Ovary (tissue), 10 donors: ENCODE measurements at regions of chr2 and their contacts with region 1.

Region 1: GRCh38 chr2:70301344-70302194 is at the start of gene FAM136A:
- DNase-seq: peak; percentile 81 to 92 (median 88)
- H3K4me3 ChIP-seq: peak within 1 kb of the TSS; percentile 82
- H3K27ac ChIP-seq: peak within 1 kb of the TSS; percentile 52 to 75
- H3K4me1 ChIP-seq: peaks cover 2% of the 10 kb centered on the region
- H3K27me3 ChIP-seq: no peaks in the 10 kb centered on the region
- CTCF ChIP-seq: peak; percentile 89 to 95 (median 94)
- EP300 ChIP-seq: no peak
- POLR2A ChIP-seq: no peak
- total RNA-seq, gene FAM136A: 10.4 to 23.1 (median 17.2) TPM

Region 2: GRCh38 chr2:70340921-70341765 is 39.6 kb after region 1 on chr2:
- intact Hi-C with region 1: no loop called
- DNase-seq: no peak
- H3K4me3 ChIP-seq: no peak overlapping the region
- H3K27ac ChIP-seq: no peak overlapping the region
- H3K4me1 ChIP-seq: no peaks in the 10 kb centered on the region
- H3K27me3 ChIP-seq: no peaks in the 10 kb centered on the region
- CTCF ChIP-seq: no peak
- EP300 ChIP-seq: no peak
- POLR2A ChIP-seq: no peak

Region 3: DNA sequence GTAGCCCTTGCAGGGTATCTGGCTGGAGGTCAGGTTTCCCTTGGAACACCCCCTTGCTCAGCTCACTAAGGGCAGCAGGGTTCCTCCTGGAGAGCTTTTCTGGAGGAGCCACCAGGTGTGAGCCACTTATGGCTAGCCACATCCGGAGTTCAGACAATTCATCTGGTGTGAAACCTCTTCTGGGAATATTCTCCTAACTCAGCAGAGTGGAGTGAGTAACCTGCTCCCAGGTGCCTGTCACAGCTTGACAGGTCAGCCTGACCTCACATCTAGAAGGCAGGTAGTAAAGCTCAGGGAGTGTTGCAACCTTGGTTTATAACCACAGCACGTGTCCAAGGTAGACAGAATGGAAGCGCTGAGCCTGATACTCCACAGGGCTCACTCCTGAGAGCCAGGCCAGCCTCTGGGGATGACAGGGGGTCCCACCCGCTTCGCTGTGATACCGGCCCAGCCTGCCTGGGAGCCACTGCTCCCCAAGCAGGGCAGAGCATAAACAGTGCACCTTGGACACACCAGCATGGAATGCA is 314.7 kb after region 1 on chr2:
- intact Hi-C with region 1: loop called in 1 of 4 experiments (anchors 10 kb)
- DNase-seq: no peak
- H3K4me3 ChIP-seq: no peak overlapping the region
- H3K27ac ChIP-seq: no peak overlapping the region
- H3K4me1 ChIP-seq: no peaks in the 10 kb centered on the region
- H3K27me3 ChIP-seq: no peaks in the 10 kb centered on the region
- CTCF ChIP-seq: no peak
- EP300 ChIP-seq: no peak
- POLR2A ChIP-seq: no peak

Region 4: DNA sequence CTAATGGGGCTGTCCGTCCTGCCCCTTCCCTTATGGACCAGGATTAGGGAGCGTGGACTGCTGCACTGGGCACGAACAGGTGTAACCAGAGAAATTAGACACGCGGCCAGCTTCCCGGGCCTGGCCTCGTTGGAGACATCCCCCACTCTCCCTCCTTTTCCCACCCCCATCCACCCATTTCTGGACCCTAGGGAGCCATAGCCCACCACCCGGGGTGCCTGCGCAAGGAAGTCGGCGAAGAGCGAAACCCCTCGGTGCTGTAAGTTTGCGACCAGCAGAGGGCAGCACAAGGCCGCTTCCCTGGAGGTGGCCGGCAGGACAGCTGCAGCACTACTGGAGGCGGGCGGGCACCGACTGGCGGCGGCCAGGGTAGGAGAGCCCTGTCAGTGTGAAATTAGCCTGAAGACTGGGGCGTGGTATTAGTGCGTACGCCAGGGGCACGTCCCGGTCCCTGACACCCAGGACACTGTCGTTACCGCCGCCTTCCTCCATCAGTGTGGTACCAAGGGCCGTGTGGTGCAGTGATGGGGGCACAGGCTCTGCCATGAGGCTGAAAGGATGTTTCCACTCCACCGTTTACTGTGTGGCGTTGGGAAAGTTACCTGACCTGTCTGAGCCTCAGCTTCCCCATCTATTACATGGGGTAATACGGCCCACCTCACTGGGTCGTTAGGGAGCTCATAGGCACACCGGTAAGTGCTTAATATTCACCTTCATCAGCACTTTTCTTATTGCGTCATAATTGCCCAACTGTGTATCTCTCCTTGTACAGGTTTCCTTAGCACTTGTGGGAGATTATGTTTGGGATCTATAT is 570.0 kb after region 1 on chr2:
- intact Hi-C with region 1: no loop called
- DNase-seq: peak; percentile 73 to 86 (median 77)
- H3K4me3 ChIP-seq: no peak overlapping the region
- H3K27ac ChIP-seq: no peak overlapping the region
- H3K4me1 ChIP-seq: peaks cover 4% of the 10 kb centered on the region
- H3K27me3 ChIP-seq: no peaks in the 10 kb centered on the region
- CTCF ChIP-seq: peak; percentile 52 to 79 (median 67)
- EP300 ChIP-seq: no peak
- POLR2A ChIP-seq: no peak